IMR-90 (cell line): ENCODE measurements at regions of chr7 and their contacts with region 1.

Region 1: GRCh38 chr7:66731986-66732385 is 8.5 kb upstream of the RABGEF1 start:
- DNase-seq: no peak
- ATAC-seq: no peak; the same call in 1 of the 2 replicates
- H3K4me3 ChIP-seq: no peak overlapping the region
- H3K27ac ChIP-seq: no peak overlapping the region
- H3K4me1 ChIP-seq: no peaks in the 10 kb centered on the region
- H3K27me3 ChIP-seq: no peaks in the 10 kb centered on the region
- CTCF ChIP-seq: no peak
- POLR2A ChIP-seq: no peak
- RAD21 ChIP-seq: no peak

Region 2: DNA sequence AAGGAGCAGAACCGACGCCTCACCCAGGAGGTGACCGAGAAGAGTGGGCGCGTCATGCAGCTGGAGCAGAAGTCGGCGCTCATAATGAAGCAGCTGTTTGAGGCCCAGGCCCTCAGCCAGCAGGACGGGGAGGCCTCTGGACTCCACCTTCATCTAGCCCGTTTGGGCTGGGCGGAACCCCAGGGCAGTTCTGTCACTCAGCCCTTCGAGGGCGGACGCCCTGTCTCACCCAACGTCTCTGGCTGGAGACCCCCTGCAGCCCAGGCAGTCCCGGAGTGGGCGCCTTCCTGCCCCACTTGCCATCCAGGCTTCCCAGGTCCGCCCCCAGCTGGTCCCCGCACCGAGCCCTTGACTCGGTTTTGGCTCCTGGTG is 174.8 kb before region 1 on chr7:
- CTCF ChIA-PET with region 1: no interaction called
- POLR2A ChIA-PET with region 1: no interaction called
- dilution Hi-C with region 1: no loop called
- in situ Hi-C with region 1: no loop called
- intact Hi-C with region 1: no loop called
- DNase-seq: no peak
- ATAC-seq: no peak
- H3K4me3 ChIP-seq: no peak overlapping the region
- H3K27ac ChIP-seq: no peak overlapping the region
- H3K4me1 ChIP-seq: peaks cover 10% of the 10 kb centered on the region; the same call in 1 of the 2 replicates
- H3K27me3 ChIP-seq: no peaks in the 10 kb centered on the region
- CTCF ChIP-seq: no peak
- POLR2A ChIP-seq: no peak
- RAD21 ChIP-seq: no peak

Region 3: DNA sequence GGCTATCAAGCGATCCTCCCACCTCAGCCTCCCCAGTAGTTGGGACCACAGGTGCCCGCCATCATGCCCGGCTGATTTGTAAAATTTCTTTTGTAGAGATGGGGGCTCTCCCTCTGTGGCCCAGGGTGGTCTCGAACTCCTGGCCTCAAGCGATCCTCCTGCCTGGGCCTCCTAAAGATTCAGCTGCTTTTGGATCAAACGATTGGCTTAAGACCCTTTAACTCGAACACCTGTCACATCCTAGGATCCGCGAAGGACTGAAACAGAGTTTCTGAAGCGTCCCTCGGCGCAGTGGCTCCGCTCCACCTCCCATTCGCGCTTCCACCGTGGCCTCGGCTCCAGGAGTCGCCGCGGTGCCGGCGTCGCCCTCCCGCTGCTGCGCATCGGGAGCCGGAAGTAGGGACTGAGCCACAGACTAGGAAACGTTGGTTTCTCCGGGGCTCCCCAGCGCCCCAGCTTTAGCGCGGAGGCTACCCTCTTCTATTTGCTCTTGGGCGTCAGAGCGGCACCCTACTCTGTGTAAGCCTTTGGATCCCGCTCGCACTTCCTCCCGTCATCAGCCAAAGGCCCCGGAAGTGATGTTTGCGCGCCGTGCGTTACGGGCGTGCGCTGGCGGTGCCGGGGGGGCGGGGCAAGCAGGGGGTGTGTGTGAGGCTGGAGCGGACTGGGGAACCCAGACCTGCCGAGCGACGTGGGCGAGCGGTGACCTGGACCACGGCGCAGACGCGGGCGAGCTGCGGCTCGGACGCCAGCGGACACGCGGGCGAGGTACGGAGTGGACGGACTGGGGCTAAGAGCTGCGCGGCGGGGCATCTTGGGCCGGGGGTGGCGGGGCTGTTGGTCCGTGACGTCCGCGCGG is 50.3 kb before region 1 on chr7:
- CTCF ChIA-PET with region 1: no interaction called
- POLR2A ChIA-PET with region 1: no interaction called
- dilution Hi-C with region 1: no loop called
- in situ Hi-C with region 1: no loop called
- intact Hi-C with region 1: no loop called
- DNase-seq: peak; percentile 94
- ATAC-seq: peak; percentile 92
- H3K4me3 ChIP-seq: peak overlapping the region; percentile 82
- H3K27ac ChIP-seq: peak overlapping the region; percentile 73
- H3K4me1 ChIP-seq: 0 out of 2 replicates have a peak, but pooled peaks cover 3% of the 10 kb centered on the region
- H3K27me3 ChIP-seq: no peaks in the 10 kb centered on the region
- CTCF ChIP-seq: no peak
- POLR2A ChIP-seq: peak; percentile 98
- RAD21 ChIP-seq: no peak

Region 4: GRCh38 chr7:66894463-66895080 is 162.6 kb after region 1 on chr7:
- CTCF ChIA-PET with region 1: no interaction called
- POLR2A ChIA-PET with region 1: interaction called, 11 read pairs
- dilution Hi-C with region 1: no loop called
- in situ Hi-C with region 1: no loop called
- intact Hi-C with region 1: no loop called
- DNase-seq: peak; percentile 46
- ATAC-seq: no peak
- H3K4me3 ChIP-seq: no peak overlapping the region
- H3K27ac ChIP-seq: no peak overlapping the region
- H3K4me1 ChIP-seq: no peaks in the 10 kb centered on the region
- H3K27me3 ChIP-seq: no peaks in the 10 kb centered on the region
- CTCF ChIP-seq: no peak
- POLR2A ChIP-seq: no peak
- RAD21 ChIP-seq: no peak